Transverse colon (tissue), 4 donors: ENCODE measurements at regions of chr18 and their contacts with region 1.

Region 1: GRCh38 chr18:13762690-13763439 is 36.4 kb downstream of the RNMT start:
- DNase-seq: no peak
- H3K4me3 ChIP-seq: no peak overlapping the region
- H3K27ac ChIP-seq: no peak overlapping the region
- H3K4me1 ChIP-seq: no peaks in the 10 kb centered on the region
- H3K27me3 ChIP-seq: no peaks in the 10 kb centered on the region
- CTCF ChIP-seq: no peak
- EP300 ChIP-seq: no peak
- POLR2A ChIP-seq: no peak

Region 2: DNA sequence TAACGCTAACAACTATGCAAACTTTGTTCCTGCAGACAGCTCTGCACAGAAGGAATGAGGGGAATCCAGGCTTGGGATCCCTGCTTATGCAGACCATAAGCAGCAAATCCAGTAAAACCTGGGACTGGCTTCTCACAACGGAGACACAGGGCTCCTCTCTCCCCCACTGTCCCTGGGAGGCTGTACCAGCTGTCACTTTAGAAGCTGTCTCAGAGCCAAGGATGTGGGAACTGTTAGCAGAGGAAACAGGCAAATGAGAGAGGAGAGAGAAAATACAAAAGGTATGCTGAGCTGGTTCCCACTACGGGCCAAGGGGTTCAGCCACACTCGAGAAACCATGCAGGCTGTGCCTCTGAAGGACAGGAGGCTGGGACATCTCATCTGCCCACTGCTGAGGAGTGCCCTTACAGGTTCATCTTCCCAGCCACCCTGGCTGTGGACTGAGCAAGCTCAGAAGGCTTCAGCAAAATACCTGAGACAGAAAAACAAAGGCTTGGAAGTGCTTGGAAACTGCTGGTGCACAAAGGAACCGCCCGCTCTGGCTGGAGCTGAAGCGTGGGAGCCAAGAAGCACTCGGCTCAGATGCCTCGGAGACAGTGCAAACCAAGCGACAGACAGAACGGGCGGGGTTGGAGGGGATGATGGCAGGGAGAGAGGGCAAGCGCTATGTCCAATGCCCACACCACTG is 109.0 kb before region 1 on chr18:
- in situ Hi-C with region 1: loop called in 1 of 4 experiments (anchors 25 kb)
- intact Hi-C with region 1: no loop called
- DNase-seq: no peak
- H3K4me3 ChIP-seq: no peak overlapping the region
- H3K27ac ChIP-seq: no peak overlapping the region
- H3K4me1 ChIP-seq: no peaks in the 10 kb centered on the region
- H3K27me3 ChIP-seq: no peaks in the 10 kb centered on the region
- CTCF ChIP-seq: no peak
- EP300 ChIP-seq: no peak
- POLR2A ChIP-seq: no peak

Region 3: DNA sequence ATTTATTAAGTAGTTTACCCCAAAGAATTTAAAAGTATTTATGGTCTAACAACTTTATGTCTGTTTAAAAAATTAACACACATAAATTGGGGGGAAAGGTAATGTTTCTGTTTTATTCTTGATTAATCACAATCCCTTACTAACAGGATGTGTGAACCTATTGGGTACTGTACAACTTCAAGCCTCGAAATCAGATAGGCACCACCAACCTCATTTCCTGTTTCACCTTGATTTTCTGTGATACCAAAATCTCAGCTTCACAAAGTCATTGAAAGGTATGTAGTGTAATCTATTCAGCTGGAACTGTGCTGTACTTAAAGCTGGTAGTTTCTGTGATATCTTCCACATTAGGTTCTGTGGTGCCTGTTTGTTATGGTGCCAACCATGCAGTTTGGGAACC is 32.4 kb before region 1 on chr18:
- in situ Hi-C with region 1: no loop called
- intact Hi-C with region 1: no loop called
- DNase-seq: no peak
- H3K4me3 ChIP-seq: no peak overlapping the region
- H3K27ac ChIP-seq: no peak overlapping the region
- H3K4me1 ChIP-seq: peaks cover 7 to 12% (median 9%) of the 10 kb centered on the region in 4 donors
- H3K27me3 ChIP-seq: no peaks in the 10 kb centered on the region
- CTCF ChIP-seq: no peak
- EP300 ChIP-seq: no peak
- POLR2A ChIP-seq: no peak

Region 4: DNA sequence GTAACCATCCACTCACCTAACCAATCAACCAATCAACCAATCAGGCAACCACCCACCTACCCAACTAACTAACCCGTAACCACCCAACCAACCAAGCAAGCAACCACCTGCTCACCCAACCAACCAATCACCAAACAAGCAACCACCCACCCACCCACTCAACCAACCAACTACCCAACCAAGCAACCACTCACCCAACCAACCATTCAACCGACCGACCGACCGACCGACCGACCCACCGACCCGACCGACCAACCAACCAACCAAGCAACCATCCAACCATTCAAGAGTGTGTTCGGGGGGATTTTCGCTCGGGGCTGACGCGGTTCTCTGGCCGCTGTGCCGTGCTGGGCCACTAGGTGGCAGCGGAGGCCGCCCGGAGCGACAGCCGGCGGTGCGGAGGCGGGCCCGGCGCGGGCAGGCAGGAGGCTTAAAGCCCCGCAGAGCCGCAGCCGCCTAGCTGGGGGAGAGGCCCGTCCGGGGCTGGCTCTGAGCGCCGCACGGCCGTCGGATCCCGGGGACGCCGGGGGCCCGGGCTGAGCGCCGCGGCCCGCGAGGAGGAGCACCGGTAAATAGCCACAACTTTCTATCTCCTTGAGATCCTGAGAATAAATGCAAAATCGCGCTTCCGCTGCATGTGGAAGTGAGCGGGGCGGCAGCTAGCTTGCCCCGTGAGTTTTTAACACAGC is 61.0 kb after region 1 on chr18 and contains the start of gene MC5R:
- in situ Hi-C with region 1: no loop called
- intact Hi-C with region 1: no loop called
- DNase-seq: peak; percentile 61
- H3K4me3 ChIP-seq: peak within 1 kb of the TSS in 3 of 4 donors; percentile 21 to 54 (median 40)
- H3K27ac ChIP-seq: no peak within 1 kb of the TSS
- H3K4me1 ChIP-seq: peaks cover 0 to 4% (median 0%) of the 10 kb centered on the region in 4 donors
- H3K27me3 ChIP-seq: peaks cover 32% of the 10 kb centered on the region
- CTCF ChIP-seq: peak; percentile 74 to 94 (median 88)
- EP300 ChIP-seq: no peak
- POLR2A ChIP-seq: no peak
- total RNA-seq, gene MC5R: not detected